Mammary epithelial cell (primary cell): ENCODE measurements at regions of chr17 and their contacts with region 1.

Region 1: GRCh38 chr17:55770148-55770870 is 19.5 kb downstream of the PCTP start:
- DNase-seq: peak; percentile 56
- H3K4me3 ChIP-seq: no peak overlapping the region
- H3K27ac ChIP-seq: no peak overlapping the region
- H3K4me1 ChIP-seq: peaks cover 11% of the 10 kb centered on the region
- H3K27me3 ChIP-seq: no peaks in the 10 kb centered on the region
- CTCF ChIP-seq: peak; percentile 38 to 57

Region 2: GRCh38 chr17:55496094-55496881 is 274.0 kb before region 1 on chr17:
- CTCF ChIA-PET with region 1: no interaction called
- dilution Hi-C with region 1: no loop called
- in situ Hi-C with region 1: no loop called
- intact Hi-C with region 1: no loop called
- DNase-seq: peak; percentile 67
- H3K4me3 ChIP-seq: no peak overlapping the region
- H3K27ac ChIP-seq: no peak overlapping the region
- H3K4me1 ChIP-seq: no peaks in the 10 kb centered on the region
- H3K27me3 ChIP-seq: no peaks in the 10 kb centered on the region
- CTCF ChIP-seq: no peak

Region 3: GRCh38 chr17:55584050-55584685 is 186.1 kb before region 1 on chr17:
- CTCF ChIA-PET with region 1: interaction called, 3 read pairs
- dilution Hi-C with region 1: no loop called
- in situ Hi-C with region 1: no loop called
- intact Hi-C with region 1: loop called (anchors 5 kb)
- DNase-seq: peak; percentile 53
- H3K4me3 ChIP-seq: no peak overlapping the region
- H3K27ac ChIP-seq: no peak overlapping the region
- H3K4me1 ChIP-seq: peaks cover 11% of the 10 kb centered on the region
- H3K27me3 ChIP-seq: no peaks in the 10 kb centered on the region
- CTCF ChIP-seq: no peak

Region 4: GRCh38 chr17:55601874-55602364 is 168.4 kb before region 1 on chr17:
- CTCF ChIA-PET with region 1: interaction called, 11 read pairs
- dilution Hi-C with region 1: no loop called
- in situ Hi-C with region 1: loop called in 1 of 2 experiments (anchors 5 kb)
- intact Hi-C with region 1: loop called (anchors 1 kb)
- DNase-seq: peak; percentile 27
- H3K4me3 ChIP-seq: no peak overlapping the region
- H3K27ac ChIP-seq: no peak overlapping the region
- H3K4me1 ChIP-seq: no peaks in the 10 kb centered on the region
- H3K27me3 ChIP-seq: no peaks in the 10 kb centered on the region
- CTCF ChIP-seq: peak; percentile 75 to 81

Region 5: DNA sequence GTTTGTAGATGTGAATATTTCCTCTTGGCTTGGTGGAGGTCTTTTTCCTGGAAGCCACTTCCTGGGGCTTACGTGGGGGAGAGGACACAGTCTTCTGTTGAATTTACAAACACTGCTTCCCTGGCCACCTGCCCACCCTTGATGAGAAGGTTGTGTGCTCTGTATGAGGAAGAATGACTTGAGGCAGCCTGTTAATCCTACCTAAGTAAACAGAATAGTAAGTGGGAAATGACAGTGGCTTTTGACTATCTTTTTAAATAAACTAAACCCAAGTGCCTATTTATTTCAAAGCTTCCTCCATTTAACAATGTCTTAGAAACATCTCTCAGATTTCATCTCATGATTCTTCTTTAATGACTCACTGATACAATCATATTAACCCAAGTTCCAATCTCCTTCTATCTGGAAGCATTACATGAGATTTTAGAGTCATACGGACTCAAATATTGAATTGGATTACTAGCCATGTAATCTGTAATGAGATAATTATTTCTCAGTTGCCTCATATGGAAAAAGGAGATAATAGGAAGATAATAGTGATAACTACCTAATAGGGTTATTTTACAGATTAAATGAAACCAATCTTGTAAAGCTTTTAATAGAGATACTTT is 162.5 kb before region 1 on chr17:
- CTCF ChIA-PET with region 1: interaction called, 11 read pairs
- dilution Hi-C with region 1: no loop called
- in situ Hi-C with region 1: loop called in 1 of 2 experiments (anchors 5 kb)
- intact Hi-C with region 1: no loop called
- DNase-seq: no peak
- H3K4me3 ChIP-seq: no peak overlapping the region
- H3K27ac ChIP-seq: no peak overlapping the region
- H3K4me1 ChIP-seq: no peaks in the 10 kb centered on the region
- H3K27me3 ChIP-seq: no peaks in the 10 kb centered on the region
- CTCF ChIP-seq: no peak

Region 6: GRCh38 chr17:55717898-55718735 is 52.2 kb before region 1 on chr17:
- CTCF ChIA-PET with region 1: interaction called, 4 read pairs
- dilution Hi-C with region 1: no loop called
- in situ Hi-C with region 1: loop called in 1 of 2 experiments (anchors 10 kb)
- intact Hi-C with region 1: loop called (anchors 1 kb)
- DNase-seq: peak; percentile 42
- H3K4me3 ChIP-seq: no peak overlapping the region
- H3K27ac ChIP-seq: no peak overlapping the region
- H3K4me1 ChIP-seq: peaks cover 3% of the 10 kb centered on the region
- H3K27me3 ChIP-seq: no peaks in the 10 kb centered on the region
- CTCF ChIP-seq: peak; percentile 78 to 80

Region 7: GRCh38 chr17:55734128-55734781 is 36.1 kb before region 1 on chr17:
- CTCF ChIA-PET with region 1: interaction called, 7 read pairs
- dilution Hi-C with region 1: no loop called
- in situ Hi-C with region 1: no loop called
- intact Hi-C with region 1: loop called (anchors 1 kb)
- DNase-seq: peak; percentile 47
- H3K4me3 ChIP-seq: no peak overlapping the region
- H3K27ac ChIP-seq: no peak overlapping the region
- H3K4me1 ChIP-seq: peaks cover 7% of the 10 kb centered on the region
- H3K27me3 ChIP-seq: no peaks in the 10 kb centered on the region
- CTCF ChIP-seq: no peak

Region 8: GRCh38 chr17:55750750-55751657 is 19.3 kb before region 1 on chr17 and contains the start of gene PCTP:
- CTCF ChIA-PET with region 1: no interaction called
- dilution Hi-C with region 1: no loop called
- in situ Hi-C with region 1: no loop called
- intact Hi-C with region 1: loop called (anchors 1 kb)
- DNase-seq: peak; percentile 92
- H3K4me3 ChIP-seq: peak within 1 kb of the TSS; percentile 62 to 90 (median 78)
- H3K27ac ChIP-seq: peak within 1 kb of the TSS; percentile 29
- H3K4me1 ChIP-seq: peaks cover 12% of the 10 kb centered on the region
- H3K27me3 ChIP-seq: no peaks in the 10 kb centered on the region
- CTCF ChIP-seq: peak; percentile 20 to 63
- total RNA-seq, gene PCTP: 16.3 to 27.8 TPM